ENCODE measurements at regions of chr3 and their contacts with region 1.

Region 1: GRCh38 chr3:177818712-177819240 is 621.5 kb upstream of the TBL1XR1 start:
- DNase-seq: no peak
- ATAC-seq: no peak
- H3K4me3 ChIP-seq: no peak overlapping the region
- H3K4me3 Mint-ChIP-seq: no peak overlapping the region
- H3K27ac ChIP-seq: no peak overlapping the region
- H3K27ac Mint-ChIP-seq: no peak overlapping the region
- H3K4me1 ChIP-seq: no peaks in the 10 kb centered on the region
- H3K4me1 Mint-ChIP-seq: peaks cover 5 to 7% (median 5%) of the 10 kb centered on the region in 3 donors
- H3K27me3 ChIP-seq: no peaks in the 10 kb centered on the region
- H3K27me3 Mint-ChIP-seq: no peaks in the 10 kb centered on the region

Region 2: GRCh38 chr3:177554895-177555759 is 263.6 kb before region 1 on chr3:
- CTCF ChIA-PET with region 1: no interaction called
- POLR2A ChIA-PET with region 1: interaction called in 1 of 2 experiments, 18 read pairs
- DNase-seq: no peak
- ATAC-seq: no peak
- H3K4me3 ChIP-seq: no peak overlapping the region
- H3K4me3 Mint-ChIP-seq: no peak overlapping the region
- H3K27ac ChIP-seq: peak overlapping the region; percentile 24
- H3K27ac Mint-ChIP-seq: peak overlapping the region; percentile 73 to 74
- H3K4me1 ChIP-seq: peaks cover 16 to 32% of the 10 kb centered on the region in 2 experiments
- H3K4me1 Mint-ChIP-seq: peaks cover 57 to 65% (median 63%) of the 10 kb centered on the region in 3 donors
- H3K27me3 ChIP-seq: no peaks in the 10 kb centered on the region
- H3K27me3 Mint-ChIP-seq: no peaks in the 10 kb centered on the region

Measured in T-cell (primary cell).